MCF 10A (cell line): ENCODE measurements at regions of chr5 and their contacts with region 1.

Region 1: GRCh38 chr5:156824800-156825199 is 25.3 kb upstream of the PPP1R2B start:
- DNase-seq: peak; percentile 8
- H3K4me3 Mint-ChIP-seq: no peak overlapping the region
- H3K27ac Mint-ChIP-seq: no peak overlapping the region
- H3K4me1 Mint-ChIP-seq: peaks cover 4% of the 10 kb centered on the region
- H3K27me3 Mint-ChIP-seq: no peaks in the 10 kb centered on the region
- CTCF ChIP-seq: peak; percentile 84

Region 2: DNA sequence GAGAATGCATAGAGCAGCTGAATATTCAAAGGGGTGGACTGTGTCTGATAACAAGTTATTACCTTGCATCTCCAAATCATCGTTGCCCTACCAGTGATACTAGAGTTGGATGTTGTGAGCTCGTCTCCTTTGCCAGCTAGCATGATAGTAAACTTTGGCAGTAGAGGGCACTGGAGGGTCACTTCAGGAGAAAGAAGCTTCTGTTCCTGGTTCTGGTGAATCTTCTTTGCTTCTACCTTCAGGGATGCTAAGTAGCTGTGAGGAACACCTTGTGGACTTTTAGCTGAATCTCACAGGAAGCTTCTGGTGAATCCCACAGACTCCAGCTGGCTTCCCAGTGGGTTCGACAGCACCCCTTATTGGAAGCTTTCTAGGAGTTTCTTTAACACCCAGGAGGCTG is 1124.5 kb before region 1 on chr5:
- CTCF ChIA-PET with region 1: interaction called, 18 read pairs
- POLR2A ChIA-PET with region 1: no interaction called
- intact Hi-C with region 1: loop called (anchors 1 kb)
- DNase-seq: peak; percentile 4
- H3K4me3 Mint-ChIP-seq: no peak overlapping the region
- H3K27ac Mint-ChIP-seq: no peak overlapping the region
- H3K4me1 Mint-ChIP-seq: no peaks in the 10 kb centered on the region
- H3K27me3 Mint-ChIP-seq: no peaks in the 10 kb centered on the region
- CTCF ChIP-seq: peak; percentile 56

Region 3: GRCh38 chr5:156584528-156585270 is 240.1 kb before region 1 on chr5:
- CTCF ChIA-PET with region 1: no interaction called
- POLR2A ChIA-PET with region 1: no interaction called
- intact Hi-C with region 1: no loop called
- DNase-seq: no peak
- H3K4me3 Mint-ChIP-seq: no peak overlapping the region
- H3K27ac Mint-ChIP-seq: no peak overlapping the region
- H3K4me1 Mint-ChIP-seq: peaks cover 6% of the 10 kb centered on the region
- H3K27me3 Mint-ChIP-seq: no peaks in the 10 kb centered on the region
- CTCF ChIP-seq: no peak

Region 4: DNA sequence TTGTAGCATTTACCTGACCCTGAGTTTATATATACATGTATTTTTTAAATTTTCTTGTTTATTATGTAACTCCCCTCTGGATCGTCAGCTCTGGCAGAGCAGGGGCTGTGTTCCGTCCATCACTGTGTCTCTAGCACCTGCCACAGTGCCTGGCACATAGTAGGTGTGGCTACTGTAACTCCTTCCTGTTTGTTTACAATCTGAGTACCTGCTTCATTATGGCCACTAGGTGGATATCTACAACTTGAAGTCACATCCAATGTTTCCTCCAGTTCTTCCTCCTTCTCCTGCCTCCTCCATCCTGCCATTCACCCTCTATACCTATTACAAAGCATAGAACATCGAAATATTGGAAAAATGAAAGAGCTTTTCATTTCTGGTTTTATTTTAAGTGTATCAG is 11.1 kb after region 1 on chr5:
- CTCF ChIA-PET with region 1: interaction called, 10 read pairs
- POLR2A ChIA-PET with region 1: no interaction called
- intact Hi-C with region 1: no loop called
- DNase-seq: no peak
- H3K4me3 Mint-ChIP-seq: no peak overlapping the region
- H3K27ac Mint-ChIP-seq: no peak overlapping the region
- H3K4me1 Mint-ChIP-seq: peaks cover 4% of the 10 kb centered on the region
- H3K27me3 Mint-ChIP-seq: no peaks in the 10 kb centered on the region
- CTCF ChIP-seq: peak; percentile 43